Prostate gland (tissue), 2 donors: ENCODE measurements at regions of chr4 and their contacts with region 1.

Region 1: DNA sequence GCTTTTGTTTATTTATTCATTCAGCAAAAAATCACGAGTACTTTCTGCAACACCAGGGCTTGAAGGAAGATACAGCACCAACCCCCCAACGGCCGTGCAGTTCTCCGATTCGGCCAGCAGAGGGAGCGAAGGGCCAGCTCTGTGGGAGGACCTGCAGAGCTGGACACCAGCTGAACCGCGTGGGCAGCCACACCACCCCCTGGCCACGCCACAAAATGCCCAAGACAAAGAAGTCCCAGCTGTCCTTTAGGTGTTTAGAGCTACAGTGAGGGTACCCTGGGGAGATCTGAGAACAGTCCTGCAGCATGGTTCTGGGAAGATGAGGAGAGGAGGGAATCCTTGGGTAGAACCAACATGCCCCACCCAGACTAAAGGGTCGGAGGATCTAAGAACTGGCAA is 83.1 kb downstream of the RELL1 start:
- DNase-seq: peak; percentile 73
- H3K4me3 ChIP-seq: no peak overlapping the region
- H3K27ac ChIP-seq: no peak overlapping the region
- H3K4me1 ChIP-seq: no peaks in the 10 kb centered on the region
- H3K27me3 ChIP-seq: no peaks in the 10 kb centered on the region
- CTCF ChIP-seq: peak; percentile 90 to 97 (median 95)
- POLR2A ChIP-seq: no peak

Region 2: GRCh38 chr4:37686373-37687193 is 83.5 kb after region 1 on chr4 and contains the start of gene RELL1:
- intact Hi-C with region 1: loop called (anchors 10 kb)
- DNase-seq: peak; percentile 100
- H3K4me3 ChIP-seq: peak within 1 kb of the TSS; percentile 89 to 93
- H3K27ac ChIP-seq: peak within 1 kb of the TSS; percentile 90 to 92
- H3K4me1 ChIP-seq: no peaks in the 10 kb centered on the region
- H3K27me3 ChIP-seq: no peaks in the 10 kb centered on the region
- CTCF ChIP-seq: peak in 1 of 4 experiments; percentile 12
- POLR2A ChIP-seq: peak; percentile 26
- total RNA-seq, gene RELL1: 18.9 to 26.2 TPM

Region 3: GRCh38 chr4:37697531-37697930 is 94.5 kb after region 1 on chr4:
- intact Hi-C with region 1: no loop called
- DNase-seq: no peak
- H3K4me3 ChIP-seq: no peak overlapping the region
- H3K27ac ChIP-seq: no peak overlapping the region
- H3K4me1 ChIP-seq: no peaks in the 10 kb centered on the region
- H3K27me3 ChIP-seq: no peaks in the 10 kb centered on the region
- CTCF ChIP-seq: no peak
- POLR2A ChIP-seq: no peak

Region 4: GRCh38 chr4:37802068-37802666 is 199.1 kb after region 1 on chr4:
- intact Hi-C with region 1: loop called (anchors 2 kb)
- DNase-seq: peak; percentile 33
- H3K4me3 ChIP-seq: no peak overlapping the region
- H3K27ac ChIP-seq: no peak overlapping the region
- H3K4me1 ChIP-seq: no peaks in the 10 kb centered on the region
- H3K27me3 ChIP-seq: no peaks in the 10 kb centered on the region
- CTCF ChIP-seq: peak in 3 of 4 experiments; percentile 27 to 67 (median 63)
- POLR2A ChIP-seq: no peak

Region 5: GRCh38 chr4:37891260-37892159 is 288.4 kb after region 1 on chr4:
- intact Hi-C with region 1: loop called (anchors 10 kb)
- DNase-seq: peak; percentile 56
- H3K4me3 ChIP-seq: peak overlapping the region; percentile 86 to 93
- H3K27ac ChIP-seq: peak overlapping the region; percentile 81 to 90
- H3K4me1 ChIP-seq: no peaks in the 10 kb centered on the region
- H3K27me3 ChIP-seq: no peaks in the 10 kb centered on the region
- CTCF ChIP-seq: no peak
- POLR2A ChIP-seq: no peak

Region 6: GRCh38 chr4:38034986-38035882 is 432.2 kb after region 1 on chr4:
- intact Hi-C with region 1: loop called (anchors 5 kb)
- DNase-seq: peak; percentile 63
- H3K4me3 ChIP-seq: no peak overlapping the region
- H3K27ac ChIP-seq: no peak overlapping the region
- H3K4me1 ChIP-seq: no peaks in the 10 kb centered on the region
- H3K27me3 ChIP-seq: no peaks in the 10 kb centered on the region
- CTCF ChIP-seq: peak; percentile 32 to 84 (median 72)
- POLR2A ChIP-seq: no peak